MCF 10A (cell line): ENCODE measurements at regions of chr1 and their contacts with region 1.

Region 1: GRCh38 chr1:245156081-245156735 is 1.4 kb downstream of the KIF26B start:
- DNase-seq: peak; percentile 93
- H3K4me3 Mint-ChIP-seq: peak overlapping the region; percentile 79
- H3K27ac Mint-ChIP-seq: no peak overlapping the region
- H3K4me1 Mint-ChIP-seq: peaks cover 17% of the 10 kb centered on the region
- H3K27me3 Mint-ChIP-seq: peaks cover 38% of the 10 kb centered on the region
- CTCF ChIP-seq: peak; percentile 99

Region 2: GRCh38 chr1:244768186-244768585 is 388.0 kb before region 1 on chr1:
- CTCF ChIA-PET with region 1: no interaction called
- POLR2A ChIA-PET with region 1: no interaction called
- intact Hi-C with region 1: no loop called
- DNase-seq: no peak
- H3K4me3 Mint-ChIP-seq: no peak overlapping the region
- H3K27ac Mint-ChIP-seq: no peak overlapping the region
- H3K4me1 Mint-ChIP-seq: no peaks in the 10 kb centered on the region
- H3K27me3 Mint-ChIP-seq: no peaks in the 10 kb centered on the region
- CTCF ChIP-seq: no peak

Region 3: GRCh38 chr1:245016700-245017099 is 139.5 kb before region 1 on chr1:
- CTCF ChIA-PET with region 1: no interaction called
- POLR2A ChIA-PET with region 1: no interaction called
- intact Hi-C with region 1: no loop called
- DNase-seq: no peak
- H3K4me3 Mint-ChIP-seq: no peak overlapping the region
- H3K27ac Mint-ChIP-seq: no peak overlapping the region
- H3K4me1 Mint-ChIP-seq: peaks cover 6% of the 10 kb centered on the region
- H3K27me3 Mint-ChIP-seq: no peaks in the 10 kb centered on the region
- CTCF ChIP-seq: no peak

Region 4: GRCh38 chr1:245079021-245079609 is 77.1 kb before region 1 on chr1:
- CTCF ChIA-PET with region 1: interaction called, 51 read pairs
- POLR2A ChIA-PET with region 1: interaction called, 3 read pairs
- intact Hi-C with region 1: loop called (anchors 1 kb)
- DNase-seq: peak; percentile 73
- H3K4me3 Mint-ChIP-seq: no peak overlapping the region
- H3K27ac Mint-ChIP-seq: no peak overlapping the region
- H3K4me1 Mint-ChIP-seq: peaks cover 4% of the 10 kb centered on the region
- H3K27me3 Mint-ChIP-seq: no peaks in the 10 kb centered on the region
- CTCF ChIP-seq: peak; percentile 97

Region 5: DNA sequence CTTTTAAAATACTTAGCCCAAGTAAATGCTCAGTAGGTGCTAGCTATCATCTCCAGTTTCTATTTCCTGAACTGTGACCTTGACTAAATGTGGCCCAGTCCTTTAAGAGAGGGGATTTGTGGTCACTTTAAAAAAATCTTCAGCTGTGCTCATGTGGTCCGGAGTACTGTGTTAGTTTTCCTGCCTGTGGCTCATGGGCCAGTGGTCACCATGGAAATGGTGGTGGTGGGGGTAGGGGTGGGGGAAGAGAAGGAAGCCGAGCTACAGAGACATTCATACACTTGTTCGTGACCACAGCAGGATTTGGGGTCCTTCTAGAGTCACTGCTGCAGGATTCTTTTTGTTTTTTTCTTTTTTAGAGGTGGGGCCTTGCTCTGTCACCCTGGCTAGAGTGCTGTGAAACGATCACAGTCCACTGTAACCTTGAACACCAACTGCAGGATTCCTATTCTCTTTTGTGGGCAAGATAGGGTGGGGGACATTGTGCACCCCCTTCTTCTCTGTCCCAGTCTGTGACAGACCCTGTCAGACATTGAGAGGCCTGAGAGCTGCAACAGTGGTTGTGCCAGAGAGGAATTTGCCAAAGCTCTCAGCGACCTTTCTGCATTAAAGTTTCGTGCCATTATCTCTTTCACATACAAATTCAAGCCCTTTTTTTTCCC is 24.4 kb after region 1 on chr1:
- CTCF ChIA-PET with region 1: interaction called, 16 read pairs
- POLR2A ChIA-PET with region 1: no interaction called
- intact Hi-C with region 1: no loop called
- DNase-seq: no peak
- H3K4me3 Mint-ChIP-seq: no peak overlapping the region
- H3K27ac Mint-ChIP-seq: no peak overlapping the region
- H3K4me1 Mint-ChIP-seq: no peaks in the 10 kb centered on the region
- H3K27me3 Mint-ChIP-seq: no peaks in the 10 kb centered on the region
- CTCF ChIP-seq: no peak

Region 6: DNA sequence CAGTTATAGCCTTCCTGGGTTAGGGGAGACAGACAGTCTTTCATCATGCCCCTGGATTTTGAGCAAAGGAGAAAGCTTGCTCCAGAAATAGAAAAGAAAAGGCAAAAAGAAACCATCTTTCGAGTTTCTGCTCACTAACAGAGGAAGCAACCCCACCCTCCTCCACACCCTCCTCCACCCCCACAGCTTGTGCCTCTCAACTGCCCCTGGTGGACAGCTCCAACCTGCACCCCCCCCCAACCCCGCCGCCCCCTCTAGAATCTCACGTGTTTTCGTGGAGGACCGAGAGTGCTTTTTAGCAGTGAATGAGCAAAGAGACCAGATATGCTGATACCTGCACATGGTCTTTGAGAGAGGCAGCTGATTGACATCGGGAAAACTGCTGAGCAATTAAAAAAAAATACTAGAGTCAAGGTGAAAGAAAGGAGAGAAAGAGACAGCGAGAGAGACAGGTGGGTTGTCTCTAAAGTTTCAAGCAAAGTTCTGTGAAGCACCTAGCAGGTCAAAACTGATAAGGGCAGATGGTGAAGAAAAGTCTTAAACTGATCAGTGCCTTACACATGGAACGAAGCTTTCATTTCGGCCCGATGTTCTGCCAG is 356.9 kb after region 1 on chr1:
- CTCF ChIA-PET with region 1: interaction called, 5 read pairs
- POLR2A ChIA-PET with region 1: no interaction called
- intact Hi-C with region 1: loop called (anchors 5 kb)
- DNase-seq: no peak
- H3K4me3 Mint-ChIP-seq: no peak overlapping the region
- H3K27ac Mint-ChIP-seq: no peak overlapping the region
- H3K4me1 Mint-ChIP-seq: peaks cover 9% of the 10 kb centered on the region
- H3K27me3 Mint-ChIP-seq: peaks cover 67% of the 10 kb centered on the region
- CTCF ChIP-seq: peak; percentile 6

Region 7: GRCh38 chr1:245528258-245528635 is 372.0 kb after region 1 on chr1:
- CTCF ChIA-PET with region 1: no interaction called
- POLR2A ChIA-PET with region 1: no interaction called
- intact Hi-C with region 1: no loop called
- DNase-seq: no peak
- H3K4me3 Mint-ChIP-seq: no peak overlapping the region
- H3K27ac Mint-ChIP-seq: no peak overlapping the region
- H3K4me1 Mint-ChIP-seq: no peaks in the 10 kb centered on the region
- H3K27me3 Mint-ChIP-seq: peaks cover 64% of the 10 kb centered on the region
- CTCF ChIP-seq: no peak

Region 8: DNA sequence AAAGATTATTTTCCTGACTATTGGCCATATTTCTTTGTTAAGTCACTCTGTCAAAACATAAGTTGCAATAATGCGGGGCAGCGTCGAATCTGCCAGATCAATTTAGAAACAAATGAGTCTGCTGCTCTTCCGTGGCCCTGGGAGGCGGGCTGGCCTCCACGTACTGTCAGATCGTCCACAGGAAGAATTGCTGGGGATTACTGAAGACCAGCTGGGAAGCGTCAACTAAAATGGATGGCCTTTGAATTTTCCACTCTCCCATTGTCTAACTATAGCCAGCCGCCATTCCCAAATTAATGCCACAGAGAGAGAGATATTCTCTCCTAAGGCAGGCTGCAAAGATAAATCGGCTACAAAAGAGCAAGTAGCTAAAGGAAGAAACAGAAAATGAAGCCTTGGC is 790.7 kb after region 1 on chr1:
- CTCF ChIA-PET with region 1: interaction called, 10 read pairs
- POLR2A ChIA-PET with region 1: no interaction called
- intact Hi-C with region 1: no loop called
- DNase-seq: no peak
- H3K4me3 Mint-ChIP-seq: no peak overlapping the region
- H3K27ac Mint-ChIP-seq: no peak overlapping the region
- H3K4me1 Mint-ChIP-seq: no peaks in the 10 kb centered on the region
- H3K27me3 Mint-ChIP-seq: no peaks in the 10 kb centered on the region
- CTCF ChIP-seq: no peak

Region 9: DNA sequence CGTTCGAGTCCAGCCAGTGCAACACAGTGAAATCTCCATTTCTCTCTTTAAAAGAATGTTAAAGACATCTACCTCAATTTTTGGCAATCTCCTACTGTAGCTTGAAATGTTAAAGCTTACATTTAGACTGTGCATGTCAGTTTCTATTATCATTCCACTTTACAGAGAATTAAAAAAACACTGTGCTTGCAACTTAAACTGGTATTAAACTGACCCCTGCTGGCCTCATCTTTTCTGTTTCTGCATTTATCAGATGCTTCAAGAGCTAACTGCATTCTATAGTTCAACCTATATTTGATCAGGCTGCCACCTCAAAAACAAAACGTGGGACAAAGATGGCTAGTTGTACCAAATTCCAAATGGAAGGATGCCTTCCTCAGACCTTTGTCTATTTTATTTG is 1124.3 kb after region 1 on chr1:
- CTCF ChIA-PET with region 1: interaction called, 60 read pairs
- POLR2A ChIA-PET with region 1: no interaction called
- intact Hi-C with region 1: loop called (anchors 1 kb)
- DNase-seq: peak; percentile 47
- H3K4me3 Mint-ChIP-seq: no peak overlapping the region
- H3K27ac Mint-ChIP-seq: no peak overlapping the region
- H3K4me1 Mint-ChIP-seq: no peaks in the 10 kb centered on the region
- H3K27me3 Mint-ChIP-seq: no peaks in the 10 kb centered on the region
- CTCF ChIP-seq: peak; percentile 43

Region 10: DNA sequence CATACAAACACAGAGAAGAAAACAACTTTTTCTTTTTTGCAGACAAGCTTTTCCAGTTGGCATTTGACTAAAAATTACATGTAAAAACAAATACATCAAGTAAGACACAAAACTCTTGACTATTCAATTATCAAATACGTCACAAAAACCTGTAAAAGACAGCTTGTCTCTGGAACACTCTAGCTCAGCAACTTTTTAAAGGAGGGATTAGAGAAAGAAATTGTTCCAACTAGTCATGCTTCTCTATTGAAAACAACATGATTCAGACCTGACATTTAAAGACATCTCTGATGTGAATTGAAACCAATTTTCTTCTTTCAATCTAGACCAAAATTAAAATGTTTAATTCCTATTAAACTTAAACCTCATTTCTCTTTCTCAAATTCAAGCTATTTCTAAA is 1320.6 kb after region 1 on chr1:
- CTCF ChIA-PET with region 1: interaction called, 10 read pairs
- POLR2A ChIA-PET with region 1: no interaction called
- intact Hi-C with region 1: no loop called
- DNase-seq: no peak
- H3K4me3 Mint-ChIP-seq: no peak overlapping the region
- H3K27ac Mint-ChIP-seq: no peak overlapping the region
- H3K4me1 Mint-ChIP-seq: peaks cover 6% of the 10 kb centered on the region
- H3K27me3 Mint-ChIP-seq: no peaks in the 10 kb centered on the region
- CTCF ChIP-seq: no peak